ENCODE measurements at regions of chr5 and their contacts with region 1.

Region 1: DNA sequence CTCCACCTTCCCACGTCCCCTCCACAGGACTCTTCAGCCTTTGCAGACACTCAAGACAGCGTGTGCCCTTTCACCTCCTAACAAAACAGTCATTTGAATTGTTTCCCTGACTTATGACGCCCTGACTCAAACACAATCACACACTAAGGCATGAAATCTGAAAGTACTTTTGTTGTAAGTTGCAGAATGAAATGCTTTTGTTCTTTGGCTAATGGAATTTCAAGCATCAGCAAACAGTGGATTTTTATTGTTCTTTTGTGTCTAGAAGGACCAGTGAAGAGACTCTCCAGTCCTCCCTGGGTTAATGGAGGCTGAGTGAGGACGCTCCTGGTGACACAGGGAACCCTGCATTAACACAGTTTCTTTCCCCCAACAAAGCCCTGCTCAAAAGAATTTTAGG is 380.1 kb downstream of the CTNND2 start:
- DNase-seq: no peak
- H3K4me3 ChIP-seq: peak overlapping the region in 7 of 59 donors; percentile 3 to 36 (median 14)
- H3K27ac ChIP-seq: peak overlapping the region; percentile 75 to 99 (median 95)
- H3K27me3 ChIP-seq: no peaks in the 10 kb centered on the region
- CTCF ChIP-seq: peak in 2 of 56 donors; percentile 13 to 14

Region 2: DNA sequence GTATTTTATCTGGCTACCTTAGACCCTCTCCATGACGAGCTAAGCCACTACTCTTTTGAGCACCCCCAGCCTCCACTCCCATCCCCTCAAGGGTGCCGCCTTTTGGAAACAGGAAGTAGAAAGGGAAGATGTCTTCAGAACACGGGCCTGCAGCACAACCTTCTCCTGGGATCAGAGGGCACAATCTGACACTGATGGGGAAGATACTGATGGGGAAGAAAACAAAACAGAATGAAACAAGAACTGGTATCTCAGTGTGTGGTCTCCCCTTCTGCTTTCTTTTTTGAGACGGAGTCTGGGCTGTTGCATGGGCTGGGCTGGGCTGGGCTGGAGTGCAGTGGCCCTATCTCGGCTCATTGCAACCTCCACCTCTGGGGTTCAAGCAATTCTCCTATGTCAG is 223.5 kb before region 1 on chr5:
- intact Hi-C with region 1: no loop called
- DNase-seq: no peak
- H3K4me3 ChIP-seq: no peak overlapping the region
- H3K27ac ChIP-seq: peak overlapping the region in 36 of 59 donors; percentile 1 to 72 (median 50)
- H3K27me3 ChIP-seq: no peaks in the 10 kb centered on the region
- CTCF ChIP-seq: no peak

Region 3: DNA sequence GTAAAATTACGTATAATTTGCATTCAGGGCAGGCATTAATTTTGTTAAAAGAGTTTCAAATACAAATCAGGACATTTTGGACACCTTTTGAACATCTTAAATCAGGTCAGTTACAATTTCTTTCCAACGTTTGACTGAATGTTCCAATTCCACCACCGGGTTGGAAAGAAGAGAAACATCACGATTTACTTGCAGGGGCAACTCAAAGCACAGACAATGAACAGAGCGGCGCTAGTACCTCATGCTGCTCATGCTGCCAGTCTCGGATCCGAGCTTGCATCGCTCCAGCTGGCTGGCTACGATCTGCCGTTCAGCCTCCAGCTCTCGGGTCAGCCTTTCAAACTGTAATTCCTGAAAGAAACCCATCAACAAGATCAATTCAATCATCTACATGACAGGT is 40.5 kb after region 1 on chr5:
- intact Hi-C with region 1: loop called in 1 of 2 experiments (anchors 5 kb)
- DNase-seq: peak; percentile 54 to 90 (median 86)
- H3K4me3 ChIP-seq: peak overlapping the region in 48 of 59 donors; percentile 1 to 55 (median 28)
- H3K27ac ChIP-seq: peak overlapping the region; percentile 35 to 96 (median 87)
- H3K27me3 ChIP-seq: no peaks in the 10 kb centered on the region
- CTCF ChIP-seq: peak in 38 of 56 donors; percentile 8 to 65 (median 32)

Region 4: DNA sequence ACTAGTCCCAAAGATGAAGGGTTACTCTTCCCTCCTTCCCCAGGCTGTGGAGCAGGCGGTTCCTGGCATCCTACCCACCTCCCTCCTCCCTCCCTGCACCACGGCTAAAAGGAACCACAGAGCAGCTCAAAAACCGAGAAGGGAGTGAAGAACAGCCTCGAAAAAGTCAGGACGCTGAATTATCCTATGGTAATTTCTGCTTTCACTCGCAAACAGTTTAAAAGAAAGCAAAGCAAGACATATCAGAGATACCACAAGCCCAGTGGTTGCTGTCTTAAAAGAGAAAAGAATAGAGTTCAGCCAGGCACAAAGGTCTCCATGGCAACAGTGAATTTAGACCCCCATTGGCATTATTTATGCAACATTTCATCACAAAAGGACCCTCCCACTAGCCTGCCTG is 64.6 kb after region 1 on chr5:
- intact Hi-C with region 1: loop called (anchors 10 kb)
- DNase-seq: peak; percentile 37 to 75 (median 66)
- H3K4me3 ChIP-seq: peak overlapping the region; percentile 12 to 74 (median 54)
- H3K27ac ChIP-seq: peak overlapping the region in 58 of 59 donors; percentile 33 to 96 (median 91)
- H3K27me3 ChIP-seq: no peaks in the 10 kb centered on the region
- CTCF ChIP-seq: peak in 2 of 56 donors; percentile 12 to 19

Region 5: GRCh38 chr5:11596185-11596584 is 72.0 kb after region 1 on chr5:
- intact Hi-C with region 1: loop called in 1 of 2 experiments (anchors 10 kb)
- DNase-seq: no peak
- H3K4me3 ChIP-seq: peak overlapping the region in 26 of 59 donors; percentile 3 to 51 (median 26)
- H3K27ac ChIP-seq: peak overlapping the region; percentile 67 to 97 (median 88)
- H3K27me3 ChIP-seq: no peaks in the 10 kb centered on the region
- CTCF ChIP-seq: peak in 1 of 56 donors; percentile 2

Region 6: GRCh38 chr5:11619339-11620024 is 95.3 kb after region 1 on chr5:
- intact Hi-C with region 1: loop called in 1 of 2 experiments (anchors 5 kb)
- DNase-seq: no peak
- H3K4me3 ChIP-seq: no peak overlapping the region
- H3K27ac ChIP-seq: peak overlapping the region in 11 of 59 donors; percentile 1 to 54 (median 27)
- H3K27me3 ChIP-seq: no peaks in the 10 kb centered on the region
- CTCF ChIP-seq: peak; percentile 32 to 89 (median 66)